CD4-positive, alpha-beta memory T cell (primary cell): ENCODE measurements at regions of chr20 and their contacts with region 1.

Region 1: GRCh38 chr20:18287915-18288748 is at the start of gene ZNF133:
- DNase-seq: peak; percentile 96 to 99 (median 97)
- H3K4me3 ChIP-seq: peak within 1 kb of the TSS; percentile 87 to 99
- H3K4me3 Mint-ChIP-seq: peak within 1 kb of the TSS; percentile 92 to 99 (median 98)
- H3K27ac ChIP-seq: peak within 1 kb of the TSS; percentile 95
- H3K27ac Mint-ChIP-seq: peak within 1 kb of the TSS; percentile 98 to 100 (median 100)
- H3K4me1 ChIP-seq: peaks cover 19% of the 10 kb centered on the region
- H3K4me1 Mint-ChIP-seq: peaks cover 19 to 34% (median 25%) of the 10 kb centered on the region in 4 donors
- H3K27me3 ChIP-seq: peaks cover 11% of the 10 kb centered on the region
- H3K27me3 Mint-ChIP-seq: peaks cover 11 to 19% of the 10 kb centered on the region in 2 donors
- total RNA-seq, gene ZNF133: 9.1 to 11.8 TPM

Region 2: DNA sequence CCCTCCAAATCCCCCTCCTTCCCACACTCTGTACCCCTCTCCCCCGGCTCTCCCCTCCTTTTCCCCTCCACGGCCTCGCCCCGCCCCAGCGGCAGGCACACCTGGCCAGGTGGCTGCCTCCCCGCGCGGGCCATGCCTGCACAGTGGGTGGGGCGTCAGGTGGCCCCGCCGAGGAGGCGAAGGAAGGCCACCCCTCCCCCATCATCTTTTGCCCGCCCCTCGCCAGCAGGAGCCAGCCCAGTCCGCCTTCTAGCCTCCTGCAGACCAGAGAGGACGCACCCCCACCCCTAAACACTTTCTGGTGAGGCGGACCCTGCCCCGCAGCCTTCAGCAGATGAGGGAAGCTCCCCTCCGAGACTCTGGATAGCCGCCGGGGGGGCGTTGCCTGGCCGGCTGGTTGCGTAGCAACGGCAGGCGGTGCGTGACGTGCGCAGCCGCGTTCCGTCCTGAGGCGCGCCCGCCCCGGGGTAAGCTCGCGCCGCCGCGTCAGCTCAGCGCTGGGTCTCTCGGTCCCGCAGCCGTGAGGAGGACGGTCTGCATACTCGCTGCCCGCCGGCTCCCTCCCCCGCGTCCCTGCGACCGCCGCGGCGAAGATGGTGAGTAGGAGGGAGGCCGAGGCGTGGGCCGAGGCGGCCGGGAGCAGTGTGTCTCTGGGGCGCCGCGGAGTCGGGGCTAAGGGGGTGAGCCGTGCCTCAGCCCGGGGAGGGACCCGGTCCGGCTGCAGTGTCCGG is 718.4 kb before region 1 on chr20 and contains the start of gene DSTN:
- CTCF ChIA-PET with region 1: no interaction called
- POLR2A ChIA-PET with region 1: interaction called, 5 read pairs
- intact Hi-C with region 1: loop called (anchors 2 kb)
- DNase-seq: peak; percentile 87 to 91 (median 90)
- H3K4me3 ChIP-seq: peak within 1 kb of the TSS; percentile 73 to 84
- H3K4me3 Mint-ChIP-seq: peak within 1 kb of the TSS; percentile 94 to 97 (median 96)
- H3K27ac ChIP-seq: peak within 1 kb of the TSS; percentile 83
- H3K27ac Mint-ChIP-seq: peak within 1 kb of the TSS; percentile 70 to 97 (median 96)
- H3K4me1 ChIP-seq: peaks cover 35% of the 10 kb centered on the region
- H3K4me1 Mint-ChIP-seq: peaks cover 23 to 37% (median 28%) of the 10 kb centered on the region in 4 donors
- H3K27me3 ChIP-seq: no peaks in the 10 kb centered on the region
- H3K27me3 Mint-ChIP-seq: no peaks in the 10 kb centered on the region
- total RNA-seq, gene DSTN: 43.1 to 49.1 TPM

Region 3: GRCh38 chr20:18276821-18277220 is 11.3 kb before region 1 on chr20:
- CTCF ChIA-PET with region 1: interaction called, 22 read pairs
- POLR2A ChIA-PET with region 1: no interaction called
- intact Hi-C with region 1: no loop called
- DNase-seq: peak; percentile 42 to 57 (median 48)
- H3K4me3 ChIP-seq: no peak overlapping the region
- H3K4me3 Mint-ChIP-seq: peak overlapping the region in 1 of 8 donors; percentile 31
- H3K27ac ChIP-seq: no peak overlapping the region
- H3K27ac Mint-ChIP-seq: no peak overlapping the region
- H3K4me1 ChIP-seq: peaks cover 4% of the 10 kb centered on the region
- H3K4me1 Mint-ChIP-seq: no peaks in the 10 kb centered on the region
- H3K27me3 ChIP-seq: peaks cover 13% of the 10 kb centered on the region
- H3K27me3 Mint-ChIP-seq: peaks cover 28 to 34% of the 10 kb centered on the region in 2 donors

Region 4: GRCh38 chr20:18360635-18361034 is 72.5 kb after region 1 on chr20:
- CTCF ChIA-PET with region 1: no interaction called
- POLR2A ChIA-PET with region 1: no interaction called
- intact Hi-C with region 1: no loop called
- DNase-seq: no peak
- H3K4me3 ChIP-seq: no peak overlapping the region
- H3K4me3 Mint-ChIP-seq: no peak overlapping the region
- H3K27ac ChIP-seq: no peak overlapping the region
- H3K27ac Mint-ChIP-seq: peak overlapping the region in 1 of 7 donors; percentile 12
- H3K4me1 ChIP-seq: no peaks in the 10 kb centered on the region
- H3K4me1 Mint-ChIP-seq: no peaks in the 10 kb centered on the region
- H3K27me3 ChIP-seq: no peaks in the 10 kb centered on the region
- H3K27me3 Mint-ChIP-seq: peaks cover 0 to 2% of the 10 kb centered on the region in 2 donors

Region 5: DNA sequence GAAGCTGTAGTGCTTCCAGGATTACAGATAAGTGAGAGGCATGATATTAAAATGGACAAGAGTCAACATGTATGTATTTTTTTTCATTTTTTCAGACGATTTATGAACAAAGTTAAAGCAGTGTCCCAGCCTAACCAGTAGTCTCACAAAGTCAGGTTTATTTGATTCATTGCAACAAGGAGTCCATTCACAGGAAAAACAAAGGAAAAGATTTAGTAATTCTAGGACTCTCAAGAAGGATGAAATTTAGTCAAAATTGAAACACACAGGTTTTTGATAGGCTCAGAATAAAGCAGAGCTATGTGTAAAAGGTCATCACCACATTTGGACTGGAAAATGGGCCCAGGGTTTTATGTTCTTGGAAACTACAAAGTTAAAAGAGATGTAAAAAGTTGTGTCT is 84.2 kb after region 1 on chr20:
- CTCF ChIA-PET with region 1: no interaction called
- POLR2A ChIA-PET with region 1: no interaction called
- intact Hi-C with region 1: no loop called
- DNase-seq: no peak
- H3K4me3 ChIP-seq: no peak overlapping the region
- H3K4me3 Mint-ChIP-seq: no peak overlapping the region
- H3K27ac ChIP-seq: no peak overlapping the region
- H3K27ac Mint-ChIP-seq: no peak overlapping the region
- H3K4me1 ChIP-seq: no peaks in the 10 kb centered on the region
- H3K4me1 Mint-ChIP-seq: no peaks in the 10 kb centered on the region
- H3K27me3 ChIP-seq: no peaks in the 10 kb centered on the region
- H3K27me3 Mint-ChIP-seq: peaks cover 7 to 13% of the 10 kb centered on the region in 2 donors

Region 6: GRCh38 chr20:18507218-18508021 is 219.3 kb after region 1 on chr20 and contains the start of gene SEC23B:
- CTCF ChIA-PET with region 1: interaction called, 5 read pairs
- POLR2A ChIA-PET with region 1: interaction called, 37 read pairs
- intact Hi-C with region 1: loop called (anchors 1 kb)
- DNase-seq: peak; percentile 99 to 100 (median 99)
- H3K4me3 ChIP-seq: peak within 1 kb of the TSS; percentile 78 to 82
- H3K4me3 Mint-ChIP-seq: peak within 1 kb of the TSS; percentile 99 to 100 (median 100)
- H3K27ac ChIP-seq: peak within 1 kb of the TSS; percentile 87
- H3K27ac Mint-ChIP-seq: peak within 1 kb of the TSS; percentile 95 to 100 (median 100)
- H3K4me1 ChIP-seq: peaks cover 22% of the 10 kb centered on the region
- H3K4me1 Mint-ChIP-seq: peaks cover 24 to 48% (median 39%) of the 10 kb centered on the region in 4 donors
- H3K27me3 ChIP-seq: no peaks in the 10 kb centered on the region
- H3K27me3 Mint-ChIP-seq: peaks cover 0 to under 1% of the 10 kb centered on the region in 2 donors
- total RNA-seq, gene SEC23B: 46.8 to 50.0 TPM

Region 7: GRCh38 chr20:18587665-18588573 is 299.8 kb after region 1 on chr20 and contains the start of gene DTD1:
- CTCF ChIA-PET with region 1: no interaction called
- POLR2A ChIA-PET with region 1: interaction called, 3 read pairs
- intact Hi-C with region 1: loop called (anchors 5 kb)
- DNase-seq: peak; percentile 66 to 77 (median 69)
- H3K4me3 ChIP-seq: peak within 1 kb of the TSS; percentile 47 to 80
- H3K4me3 Mint-ChIP-seq: peak within 1 kb of the TSS; percentile 87 to 95 (median 91)
- H3K27ac ChIP-seq: peak within 1 kb of the TSS; percentile 71
- H3K27ac Mint-ChIP-seq: peak within 1 kb of the TSS; percentile 88 to 97 (median 95)
- H3K4me1 ChIP-seq: peaks cover 27% of the 10 kb centered on the region
- H3K4me1 Mint-ChIP-seq: peaks cover 18 to 27% (median 23%) of the 10 kb centered on the region in 4 donors
- H3K27me3 ChIP-seq: no peaks in the 10 kb centered on the region
- H3K27me3 Mint-ChIP-seq: peaks cover 4 to 5% of the 10 kb centered on the region in 2 donors
- total RNA-seq, gene DTD1: 15.9 to 18.1 TPM

Region 8: DNA sequence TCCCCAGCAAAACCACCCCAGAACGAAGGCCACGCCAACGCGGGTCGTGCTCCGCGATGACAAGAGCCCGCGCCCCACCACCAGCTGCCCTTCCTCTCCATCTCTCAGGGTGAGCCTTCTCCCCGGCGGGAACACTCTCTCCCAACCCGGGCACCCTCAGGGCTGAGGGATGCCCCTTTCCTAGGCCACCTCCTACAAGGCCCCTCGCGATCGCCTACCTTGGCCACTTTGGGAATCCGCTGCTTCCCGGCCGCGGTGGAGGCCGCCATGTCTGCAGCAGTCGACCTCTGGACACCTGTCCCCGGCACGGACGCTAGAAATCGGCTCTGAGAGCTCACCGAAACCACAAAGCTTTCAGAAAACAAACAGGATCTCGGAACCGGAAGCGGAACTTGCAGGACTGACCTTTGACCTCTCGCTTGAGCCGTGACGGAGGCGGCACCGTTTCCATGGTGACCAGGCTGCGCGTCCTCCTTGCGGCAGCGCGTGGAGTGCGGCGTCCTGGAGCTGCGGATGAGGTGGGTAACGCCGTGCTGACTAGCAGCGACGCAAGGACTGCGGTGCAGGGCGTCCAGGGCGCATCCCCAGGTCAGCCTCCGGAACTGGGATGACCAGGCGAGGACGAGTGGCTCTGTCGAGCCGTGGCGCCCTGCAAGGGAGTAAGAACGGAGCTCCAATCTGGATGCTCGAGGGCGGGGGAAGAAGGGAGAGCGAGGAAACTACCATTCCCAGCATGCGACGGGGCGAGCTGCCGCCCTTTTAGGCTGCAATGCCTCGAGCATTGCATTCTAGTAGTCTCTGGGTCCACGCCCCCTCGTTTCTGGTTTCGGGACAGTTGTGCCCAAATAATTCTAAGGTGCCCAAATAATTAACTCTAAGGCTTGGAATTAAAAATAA is 1764.2 kb after region 1 on chr20 and contains the starts of genes CFAP61 and CRNKL1:
- CTCF ChIA-PET with region 1: no interaction called
- POLR2A ChIA-PET with region 1: interaction called, 14 read pairs
- intact Hi-C with region 1: no loop called
- DNase-seq: peak; percentile 97 to 99 (median 98)
- H3K4me3 ChIP-seq: peak within 1 kb of the TSS; percentile 85 to 98
- H3K4me3 Mint-ChIP-seq: peak within 1 kb of the TSS; percentile 93 to 100 (median 99)
- H3K27ac ChIP-seq: peak within 1 kb of the TSS; percentile 81
- H3K27ac Mint-ChIP-seq: peak within 1 kb of the TSS; percentile 92 to 100 (median 99)
- H3K4me1 ChIP-seq: peaks cover 19% of the 10 kb centered on the region
- H3K4me1 Mint-ChIP-seq: peaks cover 16 to 25% (median 21%) of the 10 kb centered on the region in 4 donors
- H3K27me3 ChIP-seq: peaks cover 7% of the 10 kb centered on the region
- H3K27me3 Mint-ChIP-seq: peaks cover 0 to 4% of the 10 kb centered on the region in 2 donors
- total RNA-seq, gene CFAP61: not detected
- total RNA-seq, gene CRNKL1: 30.0 to 32.9 TPM